ENCODE measurements at regions of chr7 and their contacts with region 1.

Region 1: DNA sequence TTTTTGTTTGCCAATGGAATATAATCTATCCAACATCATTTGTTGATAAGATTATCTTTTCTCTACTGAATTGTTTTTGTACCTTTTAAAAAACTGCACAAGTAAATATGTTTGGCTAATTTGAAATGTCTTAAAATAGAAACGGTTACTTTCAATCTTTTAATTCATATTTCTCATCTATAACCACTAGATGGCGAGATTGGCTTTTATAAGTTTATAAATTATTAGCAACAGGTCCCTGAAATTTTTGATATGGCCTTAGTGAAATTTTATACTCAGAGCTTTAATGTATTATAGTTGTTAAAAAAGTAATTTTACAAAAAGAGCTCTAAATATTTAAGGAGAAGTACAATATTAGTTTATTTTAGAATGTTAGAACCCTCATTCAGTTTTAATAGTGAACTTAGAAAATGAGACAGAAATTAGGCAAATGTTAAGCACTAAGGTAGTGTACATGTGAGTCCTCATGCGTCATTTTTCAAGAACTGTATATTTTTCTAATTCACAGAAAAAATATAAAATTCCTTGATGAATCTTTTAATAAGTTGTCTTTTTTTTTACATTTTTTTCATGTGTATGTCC is 592.5 kb downstream of the ARL4A start:
- DNase-seq: no peak
- H3K4me3 Mint-ChIP-seq: no peak overlapping the region
- H3K27ac Mint-ChIP-seq: no peak overlapping the region
- H3K4me1 Mint-ChIP-seq: no peaks in the 10 kb centered on the region
- H3K27me3 Mint-ChIP-seq: no peaks in the 10 kb centered on the region

Region 2: DNA sequence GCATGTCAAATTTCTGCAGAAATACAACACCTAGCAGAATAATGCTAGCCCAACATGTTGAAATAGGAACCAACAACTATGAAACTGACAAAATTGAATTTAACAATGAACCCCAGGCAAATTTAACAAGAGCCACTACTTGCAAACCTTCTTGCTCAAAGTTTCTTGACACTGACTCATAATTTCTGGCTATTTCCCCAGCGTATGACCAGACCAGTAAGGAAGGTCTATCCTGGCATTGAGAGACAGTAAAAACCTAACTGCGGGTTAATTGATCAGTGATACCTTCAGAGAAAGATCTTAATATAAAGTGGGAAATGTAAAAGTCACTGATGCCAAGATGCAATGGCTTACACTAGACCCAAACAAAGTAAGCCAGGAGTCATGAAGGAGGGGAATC is 82.4 kb before region 1 on chr7:
- intact Hi-C with region 1: no loop called
- DNase-seq: no peak
- H3K4me3 Mint-ChIP-seq: no peak overlapping the region
- H3K27ac Mint-ChIP-seq: no peak overlapping the region
- H3K4me1 Mint-ChIP-seq: no peaks in the 10 kb centered on the region
- H3K27me3 Mint-ChIP-seq: no peaks in the 10 kb centered on the region

Region 3: GRCh38 chr7:13757841-13758240 is 477.9 kb after region 1 on chr7:
- intact Hi-C with region 1: no loop called
- DNase-seq: no peak
- H3K4me3 Mint-ChIP-seq: no peak overlapping the region
- H3K27ac Mint-ChIP-seq: no peak overlapping the region
- H3K4me1 Mint-ChIP-seq: no peaks in the 10 kb centered on the region
- H3K27me3 Mint-ChIP-seq: no peaks in the 10 kb centered on the region

Region 4: DNA sequence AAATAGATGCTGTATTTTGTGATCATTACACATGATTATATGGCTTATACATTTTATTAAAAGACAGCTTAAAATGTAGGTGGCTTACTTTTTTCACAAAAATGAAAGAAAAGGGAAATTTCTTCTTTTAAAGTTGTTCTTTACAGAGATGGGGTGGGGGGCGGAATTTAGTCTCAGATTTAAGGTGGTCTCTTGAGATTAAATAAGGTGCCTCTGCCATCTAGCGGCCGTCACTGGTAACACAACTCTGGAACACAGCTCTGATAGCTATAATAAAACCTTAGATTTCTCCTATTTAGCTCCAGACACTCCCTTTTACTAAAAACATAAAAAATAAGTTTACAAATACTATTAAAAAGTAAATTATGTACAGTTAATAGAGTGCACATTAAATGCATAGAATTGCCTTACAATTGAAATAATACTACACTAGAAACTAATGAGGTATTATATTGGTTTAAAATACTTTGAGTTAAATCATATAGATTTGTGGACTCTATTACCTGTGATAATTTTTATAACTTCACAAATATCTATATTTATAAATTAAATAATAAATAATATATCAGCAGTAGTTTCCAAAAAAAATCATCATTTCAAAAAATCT is 1411.8 kb after region 1 on chr7:
- intact Hi-C with region 1: loop called (anchors 1 kb)
- DNase-seq: no peak
- H3K4me3 Mint-ChIP-seq: no peak overlapping the region
- H3K27ac Mint-ChIP-seq: no peak overlapping the region
- H3K4me1 Mint-ChIP-seq: no peaks in the 10 kb centered on the region
- H3K27me3 Mint-ChIP-seq: no peaks in the 10 kb centered on the region

Region 5: GRCh38 chr7:15015545-15016326 is 1735.8 kb after region 1 on chr7:
- intact Hi-C with region 1: loop called (anchors 5 kb)
- DNase-seq: no peak
- H3K4me3 Mint-ChIP-seq: no peak overlapping the region
- H3K27ac Mint-ChIP-seq: no peak overlapping the region
- H3K4me1 Mint-ChIP-seq: no peaks in the 10 kb centered on the region
- H3K27me3 Mint-ChIP-seq: no peaks in the 10 kb centered on the region

Measured in activated T-helper 1 cell treated with anti-CD3 and anti-CD28 coated beads, Interleukin-12 subunit alpha, Interleukin-12 subunit beta, Interleukin-2, Interleukin-4 antibody, amounts not matched to agents 30 ng/mL and 10 ng/mL and 1 ng/mL, durations not matched to agents 14 hours and 24 hours and 36 hours (primary cell).